PC-3 (cell line): ENCODE measurements at regions of chr3 and their contacts with region 1.

Region 1: GRCh38 chr3:143307613-143308183 is 188.1 kb downstream of the CHST2 start:
- DNase-seq: peak; percentile 27
- ATAC-seq: no peak
- H3K4me3 ChIP-seq: no peak overlapping the region
- H3K27ac ChIP-seq: peak overlapping the region; percentile 56
- H3K4me1 ChIP-seq: peaks cover 48% of the 10 kb centered on the region
- H3K27me3 ChIP-seq: no peaks in the 10 kb centered on the region
- CTCF ChIP-seq: no peak

Region 2: DNA sequence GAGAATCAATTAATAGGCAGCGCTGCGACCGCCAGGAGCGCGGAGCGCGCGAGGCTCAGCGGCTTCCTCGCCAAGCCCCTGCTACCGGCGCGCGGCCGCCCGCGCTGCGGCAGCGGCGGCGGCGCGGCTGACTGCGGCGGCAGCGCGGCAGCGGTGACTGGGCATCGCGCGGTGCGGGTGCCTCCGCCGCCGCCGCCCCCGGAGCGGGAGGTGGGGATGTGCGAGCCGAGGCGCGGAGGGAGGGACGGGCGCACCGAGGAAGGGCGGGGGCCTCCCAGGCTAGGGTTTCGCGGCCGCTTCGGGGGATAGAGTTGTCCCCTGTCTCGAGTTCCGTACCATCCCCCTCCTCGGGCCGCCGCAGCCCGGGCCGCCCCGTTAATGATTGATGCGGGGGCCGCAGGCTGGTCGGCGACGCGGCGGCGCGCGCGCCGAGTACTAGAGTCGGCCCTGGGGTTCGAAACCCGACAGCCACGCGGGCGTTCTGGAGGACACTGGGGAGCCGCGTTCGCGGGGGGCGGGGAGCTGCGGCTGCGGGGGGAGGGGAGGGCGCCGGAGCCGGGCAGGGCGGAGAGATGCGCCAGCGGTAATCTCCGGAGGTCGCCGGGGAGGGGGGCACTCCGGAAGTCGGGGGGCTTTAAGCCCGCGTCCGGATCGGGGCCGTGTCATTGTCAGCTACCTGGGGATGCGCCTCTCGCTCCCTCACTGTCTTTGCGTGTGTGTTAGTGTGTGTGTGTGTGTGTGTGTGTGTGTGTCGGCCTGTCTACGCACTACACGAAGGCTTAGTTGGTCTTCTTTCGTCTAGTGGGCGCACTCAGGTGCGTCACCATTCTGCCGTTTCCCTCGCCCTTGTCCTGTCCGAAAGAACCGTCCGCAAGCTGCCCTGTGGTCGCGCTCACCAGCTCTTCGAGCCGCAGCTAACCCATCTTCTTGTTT is 343.9 kb before region 1 on chr3 and contains the start of gene PAQR9:
- CTCF ChIA-PET with region 1: no interaction called
- POLR2A ChIA-PET with region 1: no interaction called
- intact Hi-C with region 1: no loop called
- DNase-seq: no peak
- ATAC-seq: peak; percentile 50
- H3K4me3 ChIP-seq: peak within 1 kb of the TSS; percentile 66
- H3K27ac ChIP-seq: no peak within 1 kb of the TSS
- H3K4me1 ChIP-seq: peaks cover 14% of the 10 kb centered on the region
- H3K27me3 ChIP-seq: 0 out of 2 replicates have a peak, but pooled peaks cover 3% of the 10 kb centered on the region
- CTCF ChIP-seq: no peak
- total RNA-seq, gene PAQR9: 0.12 TPM in 1 of 2 replicates, not detected in the other

Region 3: GRCh38 chr3:143252931-143253330 is 54.8 kb before region 1 on chr3:
- CTCF ChIA-PET with region 1: no interaction called
- POLR2A ChIA-PET with region 1: no interaction called
- intact Hi-C with region 1: no loop called
- DNase-seq: no peak
- ATAC-seq: no peak; the same call in 1 of the 2 replicates
- H3K4me3 ChIP-seq: no peak overlapping the region
- H3K27ac ChIP-seq: no peak overlapping the region
- H3K4me1 ChIP-seq: no peaks in the 10 kb centered on the region
- H3K27me3 ChIP-seq: no peaks in the 10 kb centered on the region
- CTCF ChIP-seq: no peak

Region 4: GRCh38 chr3:143329567-143330211 is 22.0 kb after region 1 on chr3:
- CTCF ChIA-PET with region 1: no interaction called
- POLR2A ChIA-PET with region 1: no interaction called
- intact Hi-C with region 1: loop called (anchors 2 kb)
- DNase-seq: no peak
- ATAC-seq: no peak
- H3K4me3 ChIP-seq: no peak overlapping the region
- H3K27ac ChIP-seq: no peak overlapping the region
- H3K4me1 ChIP-seq: peaks cover 33% of the 10 kb centered on the region
- H3K27me3 ChIP-seq: no peaks in the 10 kb centered on the region
- CTCF ChIP-seq: no peak